ENCODE measurements at regions of chr9 and their contacts with region 1.

Region 1: GRCh38 chr9:108813951-108814601 is 41.7 kb downstream of the ACTL7B start:
- DNase-seq: peak; percentile 98
- H3K27ac ChIP-seq: no peak overlapping the region
- CTCF ChIP-seq: peak; percentile 78

Region 2: DNA sequence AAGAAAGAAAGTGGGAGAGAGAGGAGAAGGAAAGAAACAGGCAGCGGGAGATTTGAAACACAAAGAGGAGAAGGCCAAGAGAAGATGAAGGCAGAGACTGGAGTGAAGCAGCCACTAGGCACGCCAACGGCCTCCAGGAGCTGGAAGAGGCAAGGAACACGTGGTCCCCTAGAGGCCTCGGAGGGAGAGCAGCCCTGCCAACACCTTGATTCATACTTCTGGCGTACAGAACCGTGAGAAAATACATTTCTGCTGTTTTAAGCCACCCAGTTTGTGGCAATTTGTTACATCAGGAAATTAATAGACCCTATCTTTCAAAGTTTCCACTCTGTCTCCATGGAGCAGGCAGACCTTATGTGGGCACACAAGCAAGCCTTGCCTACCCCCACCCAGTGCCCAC is 91.7 kb before region 1 on chr9:
- CTCF ChIA-PET with region 1: no interaction called
- POLR2A ChIA-PET with region 1: no interaction called
- DNase-seq: no peak
- H3K27ac ChIP-seq: no peak overlapping the region
- CTCF ChIP-seq: no peak

Region 3: GRCh38 chr9:108761655-108762347 is 52.3 kb before region 1 on chr9:
- CTCF ChIA-PET with region 1: interaction called, 16 read pairs
- POLR2A ChIA-PET with region 1: no interaction called
- DNase-seq: peak; percentile 94
- H3K27ac ChIP-seq: no peak overlapping the region
- CTCF ChIP-seq: peak; percentile 99

Region 4: DNA sequence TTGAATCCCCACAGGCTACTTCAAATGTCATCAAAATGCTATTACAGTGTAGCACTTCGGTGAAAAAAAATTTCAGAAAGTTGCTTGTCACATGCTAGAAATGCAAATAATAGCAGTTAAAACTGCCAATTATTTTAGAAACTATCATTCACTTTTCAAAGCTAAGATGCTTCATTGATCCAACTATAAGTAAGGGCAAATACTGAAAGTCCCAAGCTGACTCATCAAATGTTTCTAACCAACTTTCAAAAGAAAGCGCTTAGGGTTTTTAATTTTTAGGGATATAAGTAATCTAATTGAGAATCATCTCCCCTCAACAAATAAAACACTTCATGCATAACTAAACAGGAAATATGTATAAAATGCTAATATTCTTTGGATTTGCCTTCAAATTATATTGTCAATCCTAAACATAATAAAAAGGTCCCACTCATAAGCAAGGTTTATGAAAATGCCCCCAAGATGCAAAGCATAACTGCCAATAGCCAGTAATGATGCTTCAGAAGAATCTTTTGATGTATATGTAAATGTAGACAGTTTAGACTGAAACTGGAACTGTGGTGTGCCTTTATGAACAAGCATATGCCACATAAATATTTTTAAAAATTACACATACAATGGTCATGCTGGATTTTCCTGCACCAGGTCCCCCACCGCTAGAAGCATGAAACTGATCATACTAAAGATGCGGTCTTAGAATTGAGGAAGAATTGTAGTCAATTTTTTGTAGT is 60.1 kb after region 1 on chr9:
- CTCF ChIA-PET with region 1: no interaction called
- POLR2A ChIA-PET with region 1: no interaction called
- DNase-seq: no peak
- H3K27ac ChIP-seq: no peak overlapping the region
- CTCF ChIP-seq: no peak